Activated CD8-positive, alpha-beta T cell treated with anti-CD3 and anti-CD28 coated beads for 36 hours (primary cell): ENCODE measurements at regions of chr1 and their contacts with region 1.

Region 1: GRCh38 chr1:111222308-111223125 is 5.0 kb upstream of the CHI3L2 start:
- DNase-seq: peak; percentile 86
- ATAC-seq: peak; percentile 12
- H3K4me3 Mint-ChIP-seq: peak overlapping the region; percentile 64
- H3K27ac Mint-ChIP-seq: peak overlapping the region; percentile 93
- H3K4me1 Mint-ChIP-seq: peaks cover 89% of the 10 kb centered on the region
- H3K27me3 Mint-ChIP-seq: no peaks in the 10 kb centered on the region
- CTCF ChIP-seq: peak; percentile 95

Region 2: DNA sequence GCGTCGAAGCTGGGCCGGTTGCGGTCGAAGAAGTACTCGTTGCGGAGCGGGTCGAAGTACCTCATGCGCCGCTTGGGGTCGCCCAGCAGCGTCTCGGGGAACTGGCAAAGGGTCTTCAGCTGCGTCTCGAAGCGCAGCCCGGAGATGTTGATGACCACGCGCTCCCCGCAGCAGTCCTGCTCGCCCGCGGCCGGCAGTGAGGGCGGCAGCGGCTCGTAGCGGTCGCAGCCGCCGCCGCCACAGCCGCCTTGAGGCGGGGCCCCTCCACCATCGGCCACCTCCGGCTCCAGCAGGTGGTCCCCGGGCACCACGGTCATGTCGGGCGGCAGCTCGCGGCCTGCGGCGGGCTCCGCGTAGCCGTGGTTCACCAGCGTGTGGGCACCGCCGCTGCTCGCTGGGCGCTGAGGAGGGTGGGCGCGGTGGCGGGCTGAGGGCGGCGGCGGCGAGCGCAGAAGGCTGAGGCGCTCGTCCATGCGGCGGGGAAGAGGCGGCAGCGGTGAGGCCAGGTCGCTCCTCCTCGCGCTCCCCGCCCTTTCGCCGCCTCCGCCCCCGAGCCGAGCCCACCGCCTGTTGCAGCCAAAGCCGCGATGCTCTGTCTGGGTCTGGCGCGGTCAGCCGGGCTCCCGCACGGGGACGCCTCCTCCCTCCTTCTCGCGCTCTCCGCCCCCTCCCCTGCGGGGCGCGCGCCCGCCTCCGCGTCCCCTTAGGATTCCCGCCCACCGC is 548.0 kb before region 1 on chr1 and contains the start of gene KCNA3:
- CTCF ChIA-PET with region 1: no interaction called
- POLR2A ChIA-PET with region 1: no interaction called
- intact Hi-C with region 1: loop called (anchors 5 kb)
- DNase-seq: peak; percentile 74
- ATAC-seq: peak; percentile 28
- H3K4me3 Mint-ChIP-seq: peak within 1 kb of the TSS; percentile 100
- H3K27ac Mint-ChIP-seq: peak within 1 kb of the TSS; percentile 98
- H3K4me1 Mint-ChIP-seq: peaks cover 30% of the 10 kb centered on the region
- H3K27me3 Mint-ChIP-seq: no peaks in the 10 kb centered on the region
- CTCF ChIP-seq: peak; percentile 47
- total RNA-seq, gene KCNA3: 15.5 to 16.2 TPM

Region 3: GRCh38 chr1:111203681-111204200 is 18.8 kb before region 1 on chr1:
- CTCF ChIA-PET with region 1: interaction called, 150 read pairs
- POLR2A ChIA-PET with region 1: interaction called, 245 read pairs
- intact Hi-C with region 1: no loop called
- DNase-seq: peak; percentile 93
- ATAC-seq: peak; percentile 31
- H3K4me3 Mint-ChIP-seq: peak overlapping the region; percentile 99
- H3K27ac Mint-ChIP-seq: peak overlapping the region; percentile 98
- H3K4me1 Mint-ChIP-seq: peaks cover 56% of the 10 kb centered on the region
- H3K27me3 Mint-ChIP-seq: no peaks in the 10 kb centered on the region
- CTCF ChIP-seq: no peak

Region 4: GRCh38 chr1:111346089-111346885 is 123.8 kb after region 1 on chr1:
- CTCF ChIA-PET with region 1: interaction called, 10 read pairs
- POLR2A ChIA-PET with region 1: no interaction called
- intact Hi-C with region 1: no loop called
- DNase-seq: peak; percentile 81
- ATAC-seq: peak; percentile 94
- H3K4me3 Mint-ChIP-seq: peak overlapping the region; percentile 81
- H3K27ac Mint-ChIP-seq: peak overlapping the region; percentile 19
- H3K4me1 Mint-ChIP-seq: peaks cover 16% of the 10 kb centered on the region
- H3K27me3 Mint-ChIP-seq: no peaks in the 10 kb centered on the region
- CTCF ChIP-seq: peak; percentile 28

Region 5: GRCh38 chr1:111441573-111442192 is 219.2 kb after region 1 on chr1:
- CTCF ChIA-PET with region 1: interaction called, 21 read pairs
- POLR2A ChIA-PET with region 1: no interaction called
- intact Hi-C with region 1: loop called (anchors 5 kb)
- DNase-seq: peak; percentile 81
- ATAC-seq: peak; percentile 86
- H3K4me3 Mint-ChIP-seq: no peak overlapping the region
- H3K27ac Mint-ChIP-seq: peak overlapping the region; percentile 69
- H3K4me1 Mint-ChIP-seq: peaks cover 38% of the 10 kb centered on the region
- H3K27me3 Mint-ChIP-seq: no peaks in the 10 kb centered on the region
- CTCF ChIP-seq: peak; percentile 75

Region 6: DNA sequence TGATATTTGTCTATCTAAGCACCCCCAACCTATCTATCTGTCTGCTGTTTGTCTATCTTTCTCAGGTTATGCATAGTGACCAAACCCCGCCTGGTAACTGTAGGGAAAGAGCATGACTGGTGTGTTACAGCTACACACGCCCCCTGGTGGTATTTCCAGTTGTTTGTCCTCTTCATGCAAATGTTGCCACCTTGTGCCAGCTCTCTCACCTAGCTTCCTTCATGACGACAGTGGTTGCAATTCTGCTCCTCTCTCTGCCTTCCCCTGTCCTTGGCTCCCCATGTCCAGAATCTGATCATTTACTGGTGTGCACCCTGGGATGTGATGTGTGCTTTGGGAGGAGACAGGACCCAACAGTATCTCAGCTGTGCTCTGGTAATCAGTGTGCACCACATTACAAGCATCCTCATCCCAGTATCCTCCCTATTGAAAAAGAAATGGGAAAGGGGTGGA is 524.8 kb after region 1 on chr1:
- CTCF ChIA-PET with region 1: no interaction called
- POLR2A ChIA-PET with region 1: no interaction called
- intact Hi-C with region 1: loop called (anchors 10 kb)
- DNase-seq: peak; percentile 89
- ATAC-seq: peak; percentile 92
- H3K4me3 Mint-ChIP-seq: no peak overlapping the region
- H3K27ac Mint-ChIP-seq: no peak overlapping the region
- H3K4me1 Mint-ChIP-seq: no peaks in the 10 kb centered on the region
- H3K27me3 Mint-ChIP-seq: peaks cover 6% of the 10 kb centered on the region
- CTCF ChIP-seq: peak; percentile 80